HCT116 (cell line): ENCODE measurements at regions of chr3 and their contacts with region 1.

Region 1: GRCh38 chr3:98215051-98215450 is 48.6 kb downstream of the OR5H15 start:
- DNase-seq: no peak
- ATAC-seq: no peak
- H3K4me3 ChIP-seq: no peak overlapping the region
- H3K27ac ChIP-seq: no peak overlapping the region
- H3K4me1 ChIP-seq: no peaks in the 10 kb centered on the region
- H3K27me3 ChIP-seq: peaks cover 3% of the 10 kb centered on the region; the same call in 1 of the 2 replicates
- CTCF ChIP-seq: no peak
- POLR2A ChIP-seq: no peak
- RAD21 ChIP-seq: no peak

Region 2: DNA sequence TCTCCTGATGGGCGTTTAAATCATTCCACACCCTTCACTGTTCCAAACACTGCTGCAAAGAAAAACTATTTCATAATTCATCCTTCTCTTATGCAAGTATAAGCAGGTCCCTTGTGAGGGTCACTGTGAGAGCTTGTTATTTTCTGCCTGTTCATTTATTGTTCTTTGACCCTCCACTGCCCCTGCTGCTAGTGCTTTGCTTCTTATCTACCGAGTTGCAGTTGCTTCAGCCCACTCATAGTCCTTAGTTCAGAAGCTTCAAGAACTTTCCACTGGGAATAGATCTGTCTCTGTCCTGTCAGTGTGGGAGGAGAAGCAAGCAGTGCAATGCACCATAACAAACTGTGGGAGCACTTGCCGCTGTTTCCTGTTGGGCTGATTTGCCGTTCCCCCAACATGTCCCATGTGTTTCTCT is 282.7 kb before region 1 on chr3:
- CTCF ChIA-PET with region 1: no interaction called
- POLR2A ChIA-PET with region 1: no interaction called
- RAD21 ChIA-PET with region 1: no interaction called
- intact Hi-C with region 1: no loop called
- DNase-seq: no peak
- ATAC-seq: no peak
- H3K4me3 ChIP-seq: no peak overlapping the region
- H3K27ac ChIP-seq: no peak overlapping the region
- H3K4me1 ChIP-seq: no peaks in the 10 kb centered on the region
- H3K27me3 ChIP-seq: no peaks in the 10 kb centered on the region
- CTCF ChIP-seq: no peak
- POLR2A ChIP-seq: no peak
- RAD21 ChIP-seq: no peak

Region 3: DNA sequence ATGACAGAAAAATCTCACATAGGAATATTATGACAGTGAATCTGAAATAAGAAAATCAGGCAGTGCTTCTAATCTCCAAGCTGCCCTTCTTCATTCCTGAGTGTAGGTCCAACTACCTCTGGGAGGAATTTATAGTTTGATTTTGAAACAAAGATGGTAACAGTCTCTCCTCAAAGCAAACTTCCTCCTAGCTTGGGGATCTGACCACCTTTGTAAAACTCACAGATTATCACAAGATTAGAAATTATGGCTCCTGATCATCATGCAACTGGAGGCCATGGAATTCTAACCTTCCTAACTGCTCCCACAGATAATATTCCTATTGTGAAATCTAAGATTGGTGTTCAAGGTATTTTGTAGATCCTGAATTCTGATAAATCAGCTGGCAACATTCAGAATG is 60.4 kb before region 1 on chr3:
- CTCF ChIA-PET with region 1: no interaction called
- POLR2A ChIA-PET with region 1: interaction called, 5 read pairs
- RAD21 ChIA-PET with region 1: no interaction called
- intact Hi-C with region 1: loop called (anchors 1 kb)
- DNase-seq: no peak
- ATAC-seq: no peak
- H3K4me3 ChIP-seq: no peak overlapping the region
- H3K27ac ChIP-seq: no peak overlapping the region
- H3K4me1 ChIP-seq: peaks cover 0 to 12% of the 10 kb centered on the region in 2 experiments; a peak in 2 of 4 replicates
- H3K27me3 ChIP-seq: no peaks in the 10 kb centered on the region
- CTCF ChIP-seq: no peak
- POLR2A ChIP-seq: no peak
- RAD21 ChIP-seq: no peak

Region 4: DNA sequence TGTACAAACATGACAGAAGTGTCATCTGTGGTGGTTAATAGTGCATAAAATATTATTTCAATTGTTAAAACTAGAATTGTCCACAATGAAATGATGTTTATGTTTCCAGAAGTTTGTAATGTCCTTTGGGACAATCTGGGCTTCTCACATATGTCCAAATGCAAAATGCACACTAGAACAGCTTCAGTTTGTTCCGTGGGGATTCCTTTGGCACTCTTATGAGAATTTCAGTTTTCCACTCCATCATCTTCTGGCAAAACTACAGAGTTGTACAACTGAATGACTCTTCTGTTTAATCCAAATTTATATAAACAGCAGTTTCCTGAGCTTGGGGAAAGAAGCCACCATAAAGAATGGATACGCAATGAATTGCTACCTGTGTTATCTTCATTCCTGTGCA is 47.0 kb after region 1 on chr3:
- CTCF ChIA-PET with region 1: no interaction called
- POLR2A ChIA-PET with region 1: no interaction called
- RAD21 ChIA-PET with region 1: no interaction called
- intact Hi-C with region 1: loop called (anchors 1 kb)
- DNase-seq: no peak
- ATAC-seq: no peak
- H3K4me3 ChIP-seq: no peak overlapping the region
- H3K27ac ChIP-seq: no peak overlapping the region
- H3K4me1 ChIP-seq: no peaks in the 10 kb centered on the region
- H3K27me3 ChIP-seq: no peaks in the 10 kb centered on the region; the same call in 1 of the 2 replicates
- CTCF ChIP-seq: no peak
- POLR2A ChIP-seq: no peak
- RAD21 ChIP-seq: no peak

Region 5: DNA sequence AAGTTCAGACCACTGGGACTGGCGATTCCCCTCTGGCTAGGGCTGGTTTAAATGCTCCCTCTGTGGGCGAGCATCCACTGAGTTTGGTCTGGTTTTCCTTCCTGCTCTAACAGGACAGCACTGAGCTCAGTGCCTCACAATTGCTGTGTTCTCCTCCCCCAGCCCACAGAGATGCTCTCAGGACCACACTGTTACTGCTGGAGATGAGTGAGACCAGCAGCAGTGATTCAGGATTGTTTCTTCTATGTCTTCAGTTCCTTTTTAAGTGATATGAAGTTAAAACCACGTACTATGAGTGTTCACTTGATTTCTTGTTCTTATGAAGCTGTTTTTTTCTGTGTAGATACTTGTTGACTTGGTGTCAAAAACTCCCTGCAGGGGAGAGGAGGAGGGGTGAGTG is 1243.0 kb after region 1 on chr3:
- CTCF ChIA-PET with region 1: no interaction called
- POLR2A ChIA-PET with region 1: no interaction called
- RAD21 ChIA-PET with region 1: no interaction called
- intact Hi-C with region 1: no loop called
- DNase-seq: no peak
- ATAC-seq: no peak
- H3K4me3 ChIP-seq: no peak overlapping the region
- H3K27ac ChIP-seq: no peak overlapping the region
- H3K4me1 ChIP-seq: no peaks in the 10 kb centered on the region
- H3K27me3 ChIP-seq: peaks cover 23% of the 10 kb centered on the region
- CTCF ChIP-seq: no peak
- POLR2A ChIP-seq: no peak
- RAD21 ChIP-seq: no peak